ENCODE measurements at regions of chr2 and their contacts with region 1.

Region 1: DNA sequence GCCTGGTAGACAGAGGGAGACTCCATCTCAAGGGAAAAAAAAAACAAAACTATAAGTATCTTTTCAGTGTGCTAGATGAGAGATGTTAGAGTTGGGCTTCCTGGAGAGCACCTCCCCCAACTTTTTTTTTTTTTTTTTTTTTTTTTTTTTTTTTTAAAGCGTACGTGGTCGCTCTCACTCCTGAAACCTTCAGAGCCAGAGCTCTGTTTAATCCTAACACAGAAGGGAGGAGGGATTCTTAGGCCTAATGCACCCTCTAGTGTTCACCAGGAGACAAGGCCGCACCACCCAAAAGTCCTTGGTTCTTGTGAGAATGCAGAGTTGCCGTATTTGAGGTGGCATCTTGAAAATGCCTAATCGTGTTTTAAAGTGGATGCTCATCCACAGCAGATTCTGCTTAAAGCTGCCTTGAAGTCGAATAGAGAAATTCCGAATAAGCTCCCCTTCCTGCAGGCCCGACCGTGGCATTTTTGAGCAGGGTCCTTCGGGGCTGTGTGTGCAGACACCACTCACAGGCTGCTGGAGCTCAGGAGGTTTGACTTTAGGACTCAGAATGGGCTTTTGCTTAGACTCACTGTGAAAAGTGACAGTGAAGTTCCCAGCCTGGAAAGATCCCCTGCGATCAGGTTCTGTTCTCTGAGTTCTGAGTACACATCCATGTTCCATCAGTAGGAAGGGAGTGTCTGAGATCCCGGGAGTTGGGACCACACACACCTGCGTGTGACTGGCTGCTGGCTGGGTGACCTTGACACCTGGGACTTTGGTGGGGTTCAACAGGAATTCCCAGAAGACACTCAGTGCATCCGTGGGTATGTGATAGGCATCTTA is 252.6 kb downstream of the AGAP1 start:
- DNase-seq: peak; percentile 81
- CTCF ChIP-seq: peak; percentile 82

Region 2: GRCh38 chr2:234550511-234551107 is 1195.9 kb before region 1 on chr2:
- in situ Hi-C with region 1: loop called (anchors 25 kb)
- DNase-seq: peak; percentile 77
- CTCF ChIP-seq: peak; percentile 95

Region 3: DNA sequence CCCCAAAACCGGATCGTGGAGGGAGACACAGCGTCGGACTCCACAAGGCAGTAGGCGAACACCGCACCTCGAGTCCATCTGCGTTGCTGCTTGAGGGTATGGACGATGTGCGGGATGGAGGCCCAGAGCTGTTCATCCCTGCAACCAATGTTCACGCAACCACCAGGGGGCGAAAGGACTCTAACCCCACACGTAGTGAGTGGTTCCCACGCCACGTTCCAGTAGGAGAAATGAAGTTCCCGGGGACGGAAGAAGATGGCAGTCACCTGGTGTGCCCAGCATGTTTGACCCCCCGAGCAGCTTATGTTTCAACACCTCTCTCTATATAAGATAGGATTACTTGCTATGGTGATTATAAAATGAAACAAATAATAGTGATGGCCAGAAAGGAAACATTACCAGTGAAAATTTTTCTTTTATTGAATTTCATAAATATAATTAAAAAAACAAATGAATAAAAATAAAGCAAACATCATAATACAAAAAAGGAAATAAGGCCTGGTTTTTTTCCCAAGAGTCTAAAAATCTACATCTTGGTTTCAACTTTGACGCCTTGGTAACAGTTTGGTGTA is 610.4 kb before region 1 on chr2:
- in situ Hi-C with region 1: loop called (anchors 25 kb)
- DNase-seq: peak; percentile 52
- CTCF ChIP-seq: peak; percentile 59

Region 4: GRCh38 chr2:235314371-235314930 is 432.0 kb before region 1 on chr2:
- in situ Hi-C with region 1: no loop called
- DNase-seq: no peak
- CTCF ChIP-seq: no peak

Region 5: GRCh38 chr2:235614900-235615712 is 131.4 kb before region 1 on chr2:
- in situ Hi-C with region 1: no loop called
- DNase-seq: no peak
- CTCF ChIP-seq: no peak